CD4-positive, alpha-beta T cell (primary cell): ENCODE measurements at regions of chr1 and their contacts with region 1.

Region 1: GRCh38 chr1:32107742-32108661 is at the start of gene KPNA6:
- DNase-seq: peak; percentile 81 to 96 (median 88)
- ATAC-seq: peak; percentile 88
- H3K4me3 ChIP-seq: peak within 1 kb of the TSS; percentile 99
- H3K4me3 Mint-ChIP-seq: peak within 1 kb of the TSS; percentile 99
- H3K27ac ChIP-seq: peak within 1 kb of the TSS; percentile 92 to 96
- H3K27ac Mint-ChIP-seq: peak within 1 kb of the TSS; percentile 98
- H3K4me1 ChIP-seq: peaks cover 45% of the 10 kb centered on the region
- H3K4me1 Mint-ChIP-seq: peaks cover 53% of the 10 kb centered on the region
- H3K27me3 ChIP-seq: no peaks in the 10 kb centered on the region
- H3K27me3 Mint-ChIP-seq: no peaks in the 10 kb centered on the region
- CTCF ChIP-seq: no peak
- total RNA-seq, gene KPNA6: 47.1 to 47.8 TPM

Region 2: DNA sequence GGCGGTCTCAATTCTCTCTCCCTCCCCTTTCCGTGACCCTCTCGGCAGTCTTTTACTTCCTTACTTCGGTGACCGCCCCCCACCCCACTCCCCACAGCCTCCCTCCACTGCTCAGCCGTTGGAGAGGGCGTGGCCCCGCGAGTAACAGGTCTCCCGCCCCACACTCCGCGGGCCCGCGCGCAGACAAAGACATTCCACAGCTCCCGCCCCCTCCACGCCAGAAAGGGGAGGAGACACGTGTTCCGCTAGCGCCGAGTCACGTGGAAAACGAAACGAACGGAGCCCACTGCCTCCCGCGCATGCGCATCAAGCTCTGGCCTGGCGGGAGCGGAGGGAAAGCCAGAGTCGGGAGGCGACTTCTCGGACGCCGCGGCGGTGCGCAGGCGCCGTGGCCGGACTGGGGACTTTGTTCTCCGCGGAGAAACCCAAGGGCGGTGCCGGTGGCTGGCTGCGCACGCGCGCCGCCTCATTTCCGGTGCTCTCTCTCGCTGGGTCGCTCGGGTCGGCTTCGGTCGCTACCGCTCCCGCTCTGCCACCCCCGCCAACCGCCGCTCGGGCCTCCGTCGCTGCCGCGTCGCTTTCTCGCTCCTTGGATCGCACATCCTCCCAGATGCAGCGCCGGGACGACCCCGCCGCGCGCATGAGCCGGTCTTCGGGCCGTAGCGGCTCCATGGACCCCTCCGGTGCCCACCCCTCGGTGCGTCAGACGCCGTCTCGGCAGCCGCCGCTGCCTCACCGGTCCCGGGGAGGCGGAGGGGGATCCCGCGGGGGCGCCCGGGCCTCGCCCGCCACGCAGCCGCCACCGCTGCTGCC is 94.4 kb before region 1 on chr1 and contains the start of gene KHDRBS1:
- CTCF ChIA-PET with region 1: no interaction called
- POLR2A ChIA-PET with region 1: interaction called, 20 read pairs
- intact Hi-C with region 1: loop called (anchors 1 to 5 kb)
- DNase-seq: peak; percentile 95 to 100 (median 98)
- ATAC-seq: peak; percentile 85
- H3K4me3 ChIP-seq: peak within 1 kb of the TSS; percentile 73
- H3K4me3 Mint-ChIP-seq: peak within 1 kb of the TSS; percentile 97
- H3K27ac ChIP-seq: peak within 1 kb of the TSS; percentile 71 to 98
- H3K27ac Mint-ChIP-seq: peak within 1 kb of the TSS; percentile 90
- H3K4me1 ChIP-seq: peaks cover 36% of the 10 kb centered on the region
- H3K4me1 Mint-ChIP-seq: peaks cover 36% of the 10 kb centered on the region
- H3K27me3 ChIP-seq: no peaks in the 10 kb centered on the region
- H3K27me3 Mint-ChIP-seq: no peaks in the 10 kb centered on the region
- CTCF ChIP-seq: no peak
- total RNA-seq, gene KHDRBS1: 91.6 to 94.2 TPM

Region 3: DNA sequence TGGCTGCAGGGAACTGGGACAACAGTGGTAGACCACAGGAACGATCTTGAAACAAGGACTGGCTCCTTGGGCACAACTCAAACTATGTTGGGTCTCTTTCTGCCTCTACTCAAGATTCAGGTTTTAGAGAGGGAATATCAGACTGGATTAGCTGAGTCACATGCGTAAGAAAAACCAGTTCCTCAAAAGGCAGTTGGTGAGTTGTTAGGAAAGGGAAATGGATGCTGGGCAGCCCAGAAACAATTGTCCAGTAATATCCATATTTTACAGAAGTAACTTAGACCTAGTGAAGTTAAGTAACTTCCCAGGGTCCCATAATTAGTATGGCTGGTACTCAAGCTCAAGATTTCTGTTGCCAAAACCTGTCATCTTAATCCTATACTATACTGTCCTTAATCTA is 62.2 kb before region 1 on chr1:
- CTCF ChIA-PET with region 1: no interaction called
- POLR2A ChIA-PET with region 1: no interaction called
- intact Hi-C with region 1: no loop called
- DNase-seq: peak in 2 of 14 experiments; percentile 30 to 36
- ATAC-seq: no peak
- H3K4me3 ChIP-seq: no peak overlapping the region
- H3K4me3 Mint-ChIP-seq: no peak overlapping the region
- H3K27ac ChIP-seq: no peak overlapping the region
- H3K27ac Mint-ChIP-seq: no peak overlapping the region
- H3K4me1 ChIP-seq: no peaks in the 10 kb centered on the region
- H3K4me1 Mint-ChIP-seq: no peaks in the 10 kb centered on the region
- H3K27me3 ChIP-seq: no peaks in the 10 kb centered on the region
- H3K27me3 Mint-ChIP-seq: no peaks in the 10 kb centered on the region
- CTCF ChIP-seq: no peak

Region 4: DNA sequence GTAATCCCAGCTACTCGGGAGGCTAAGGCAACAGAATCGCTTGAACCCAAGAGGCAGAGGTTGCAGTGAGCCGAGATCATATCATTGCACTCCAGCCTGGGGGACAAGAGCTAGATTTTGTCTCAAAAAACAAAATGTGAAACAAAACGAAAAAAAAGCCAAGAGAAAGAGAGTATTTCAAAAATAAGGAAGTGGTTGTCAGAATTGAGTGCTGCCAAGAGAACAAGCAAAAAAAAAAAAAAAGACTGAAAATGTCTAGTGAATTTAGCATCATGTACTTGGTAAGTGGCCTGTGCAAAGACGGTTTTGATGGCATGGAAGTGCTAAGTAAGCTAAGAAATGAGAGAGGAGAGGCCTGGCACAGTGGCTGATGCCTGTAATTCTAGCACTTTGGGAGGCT is 14.1 kb after region 1 on chr1:
- CTCF ChIA-PET with region 1: interaction called, 5 read pairs
- POLR2A ChIA-PET with region 1: interaction called, 18 read pairs
- intact Hi-C with region 1: no loop called
- DNase-seq: no peak
- ATAC-seq: no peak
- H3K4me3 ChIP-seq: no peak overlapping the region
- H3K4me3 Mint-ChIP-seq: peak overlapping the region; percentile 8
- H3K27ac ChIP-seq: no peak overlapping the region
- H3K27ac Mint-ChIP-seq: peak overlapping the region; percentile 57
- H3K4me1 ChIP-seq: peaks cover 44% of the 10 kb centered on the region
- H3K4me1 Mint-ChIP-seq: peaks cover 46% of the 10 kb centered on the region
- H3K27me3 ChIP-seq: no peaks in the 10 kb centered on the region
- H3K27me3 Mint-ChIP-seq: no peaks in the 10 kb centered on the region
- CTCF ChIP-seq: no peak

Region 5: GRCh38 chr1:32200226-32201010 is 92.4 kb after region 1 on chr1 and contains the start of gene CCDC28B:
- CTCF ChIA-PET with region 1: interaction called, 3 read pairs
- POLR2A ChIA-PET with region 1: interaction called, 17 read pairs
- intact Hi-C with region 1: loop called in 1 of 2 experiments (anchors 10 kb)
- DNase-seq: peak in 13 of 14 experiments; percentile 15 to 74 (median 46)
- ATAC-seq: peak; percentile 54
- H3K4me3 ChIP-seq: peak within 1 kb of the TSS; percentile 87
- H3K4me3 Mint-ChIP-seq: peak within 1 kb of the TSS; percentile 82
- H3K27ac ChIP-seq: peak within 1 kb of the TSS; percentile 81 to 97
- H3K27ac Mint-ChIP-seq: peak within 1 kb of the TSS; percentile 95
- H3K4me1 ChIP-seq: peaks cover 75% of the 10 kb centered on the region
- H3K4me1 Mint-ChIP-seq: peaks cover 64% of the 10 kb centered on the region
- H3K27me3 ChIP-seq: no peaks in the 10 kb centered on the region
- H3K27me3 Mint-ChIP-seq: no peaks in the 10 kb centered on the region
- CTCF ChIP-seq: no peak
- total RNA-seq, gene CCDC28B: 4.0 to 5.7 TPM

Region 6: GRCh38 chr1:32240140-32240951 is 132.3 kb after region 1 on chr1:
- CTCF ChIA-PET with region 1: no interaction called
- POLR2A ChIA-PET with region 1: no interaction called
- intact Hi-C with region 1: no loop called
- DNase-seq: peak in 13 of 14 experiments; percentile 38 to 86 (median 63)
- ATAC-seq: peak; percentile 75
- H3K4me3 ChIP-seq: peak overlapping the region; percentile 90
- H3K4me3 Mint-ChIP-seq: peak overlapping the region; percentile 94
- H3K27ac ChIP-seq: peak overlapping the region; percentile 15 to 50
- H3K27ac Mint-ChIP-seq: peak overlapping the region; percentile 64
- H3K4me1 ChIP-seq: peaks cover 33% of the 10 kb centered on the region
- H3K4me1 Mint-ChIP-seq: peaks cover 25% of the 10 kb centered on the region
- H3K27me3 ChIP-seq: no peaks in the 10 kb centered on the region
- H3K27me3 Mint-ChIP-seq: no peaks in the 10 kb centered on the region
- CTCF ChIP-seq: peak; percentile 52

Region 7: DNA sequence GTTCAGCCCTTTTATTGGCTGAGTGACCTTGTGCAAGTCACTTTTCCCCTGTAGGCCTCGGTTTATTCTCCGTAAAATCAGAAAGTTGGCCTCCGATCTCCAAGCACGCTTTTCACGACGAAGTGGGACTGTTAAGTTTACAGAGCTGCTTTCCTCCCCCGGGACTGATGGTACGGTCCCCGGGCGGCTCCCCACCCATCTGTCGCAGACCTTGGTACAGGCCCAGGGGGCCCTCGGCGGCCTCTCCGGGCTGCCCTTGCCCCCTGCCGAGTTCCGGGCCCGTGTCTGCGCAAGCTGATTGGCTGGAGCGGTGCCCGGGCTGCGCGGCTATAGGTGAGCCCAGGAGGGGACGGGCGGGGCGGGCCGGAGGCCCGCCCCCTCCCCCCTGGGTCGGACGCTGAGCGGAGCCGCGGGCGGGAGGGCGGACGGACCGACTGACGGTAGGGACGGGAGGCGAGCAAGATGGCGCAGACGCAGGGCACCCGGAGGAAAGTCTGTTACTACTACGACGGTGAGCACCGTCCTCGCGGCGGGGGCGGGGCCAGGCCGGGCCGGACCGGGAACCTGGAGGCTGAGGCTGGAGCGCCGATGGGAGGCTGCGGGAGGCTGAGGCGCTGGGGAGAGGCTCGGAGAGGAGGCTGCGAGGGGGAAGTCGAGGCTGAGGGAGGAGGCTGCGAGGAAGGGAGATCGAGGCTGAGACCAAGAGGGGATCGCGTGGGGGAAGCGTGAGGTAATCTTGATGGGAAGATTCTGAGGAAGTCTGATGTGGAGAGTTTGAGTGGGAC is 183.9 kb after region 1 on chr1 and contains the start of gene HDAC1:
- CTCF ChIA-PET with region 1: no interaction called
- POLR2A ChIA-PET with region 1: interaction called, 13 read pairs
- intact Hi-C with region 1: loop called in 1 of 2 experiments (anchors 5 kb)
- DNase-seq: peak; percentile 93 to 98 (median 96)
- ATAC-seq: peak; percentile 91
- H3K4me3 ChIP-seq: peak within 1 kb of the TSS; percentile 98
- H3K4me3 Mint-ChIP-seq: peak within 1 kb of the TSS; percentile 100
- H3K27ac ChIP-seq: peak within 1 kb of the TSS; percentile 81
- H3K27ac Mint-ChIP-seq: peak within 1 kb of the TSS; percentile 92
- H3K4me1 ChIP-seq: peaks cover 67% of the 10 kb centered on the region
- H3K4me1 Mint-ChIP-seq: peaks cover 54% of the 10 kb centered on the region
- H3K27me3 ChIP-seq: no peaks in the 10 kb centered on the region
- H3K27me3 Mint-ChIP-seq: no peaks in the 10 kb centered on the region
- CTCF ChIP-seq: no peak
- total RNA-seq, gene HDAC1: 56.9 to 61.0 TPM